Thyroid gland (tissue), 4 donors: ENCODE measurements at regions of chr16 and their contacts with region 1.

Region 1: GRCh38 chr16:48535831-48536613 is 74.0 kb downstream of the N4BP1 start:
- DNase-seq: peak in 1 of 2 donors; percentile 27
- H3K4me3 ChIP-seq: no peak overlapping the region
- H3K27ac ChIP-seq: peak overlapping the region in 2 of 3 donors; percentile 69 to 88
- H3K4me1 ChIP-seq: peaks cover 27 to 44% of the 10 kb centered on the region in 2 donors
- H3K27me3 ChIP-seq: no peaks in the 10 kb centered on the region
- CTCF ChIP-seq: no peak
- POLR2A ChIP-seq: no peak

Region 2: DNA sequence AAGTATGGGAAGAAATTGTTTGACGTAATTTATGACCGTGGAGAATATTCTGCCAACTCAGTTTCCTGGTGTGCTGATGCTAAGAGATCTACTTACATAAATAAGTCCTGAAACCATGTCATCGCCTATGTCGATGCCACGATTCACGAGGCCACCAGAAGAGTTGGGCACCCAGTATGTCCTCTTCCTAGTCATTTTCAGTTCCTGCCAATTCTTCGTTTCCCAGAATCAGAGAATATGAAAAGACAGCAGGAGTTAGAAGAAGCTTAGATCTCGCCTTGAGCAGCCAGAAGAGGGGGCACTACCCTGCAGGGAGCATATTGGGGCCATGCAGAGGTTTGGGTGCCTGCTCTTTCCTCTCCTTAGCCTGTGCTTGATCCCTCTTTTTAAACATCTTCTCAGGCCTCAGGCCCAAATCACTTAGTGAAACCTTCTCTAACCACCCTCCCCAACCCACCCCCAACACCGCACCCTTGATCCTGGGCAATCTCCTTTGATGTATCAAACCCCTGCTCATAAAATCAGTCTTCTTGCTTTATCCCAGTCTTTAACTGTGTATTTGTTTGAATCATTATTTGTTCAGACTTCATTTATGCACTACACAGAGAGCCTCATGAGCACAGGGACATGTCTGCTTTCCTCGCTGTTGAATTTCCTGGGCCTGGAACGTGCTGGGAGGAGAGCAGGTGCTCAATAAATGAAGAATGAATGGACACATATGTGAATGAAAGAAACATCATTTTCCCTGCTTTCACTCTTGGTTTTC is 304.1 kb before region 1 on chr16:
- intact Hi-C with region 1: loop called (anchors 10 kb)
- DNase-seq: peak; percentile 24 to 45
- H3K4me3 ChIP-seq: no peak overlapping the region
- H3K27ac ChIP-seq: no peak overlapping the region
- H3K4me1 ChIP-seq: no peaks in the 10 kb centered on the region
- H3K27me3 ChIP-seq: no peaks in the 10 kb centered on the region
- CTCF ChIP-seq: peak in 4 of 6 experiments; percentile 11 to 43 (median 29)
- POLR2A ChIP-seq: no peak

Region 3: DNA sequence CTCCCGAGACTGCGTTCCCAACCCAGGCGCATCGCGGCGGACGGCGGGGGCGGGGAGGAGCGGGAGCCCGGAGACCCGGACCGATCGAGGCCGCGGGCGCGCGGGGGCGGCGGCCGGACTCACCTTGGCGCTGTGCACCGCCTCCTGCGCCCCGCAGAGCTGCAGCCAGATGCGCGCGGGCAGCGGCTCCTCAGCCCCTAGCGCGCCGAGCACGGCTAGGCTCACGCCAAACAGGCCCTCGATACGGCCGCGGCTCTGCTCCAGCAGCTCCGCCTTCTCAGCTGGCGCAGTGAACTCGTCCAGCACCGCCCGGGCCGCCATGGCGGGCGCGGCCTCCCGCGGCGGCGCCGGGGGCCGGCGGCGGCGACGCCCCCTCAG is 73.6 kb after region 1 on chr16:
- intact Hi-C with region 1: no loop called
- DNase-seq: peak; percentile 55 to 61
- H3K4me3 ChIP-seq: peak overlapping the region; percentile 87 to 98 (median 94)
- H3K27ac ChIP-seq: peak overlapping the region; percentile 56 to 95 (median 85)
- H3K4me1 ChIP-seq: peaks cover 32 to 43% of the 10 kb centered on the region in 2 donors
- H3K27me3 ChIP-seq: no peaks in the 10 kb centered on the region
- CTCF ChIP-seq: no peak
- POLR2A ChIP-seq: no peak